Gastrocnemius medialis (tissue), 4 donors: ENCODE measurements at regions of chr20 and their contacts with region 1.

Region 1: DNA sequence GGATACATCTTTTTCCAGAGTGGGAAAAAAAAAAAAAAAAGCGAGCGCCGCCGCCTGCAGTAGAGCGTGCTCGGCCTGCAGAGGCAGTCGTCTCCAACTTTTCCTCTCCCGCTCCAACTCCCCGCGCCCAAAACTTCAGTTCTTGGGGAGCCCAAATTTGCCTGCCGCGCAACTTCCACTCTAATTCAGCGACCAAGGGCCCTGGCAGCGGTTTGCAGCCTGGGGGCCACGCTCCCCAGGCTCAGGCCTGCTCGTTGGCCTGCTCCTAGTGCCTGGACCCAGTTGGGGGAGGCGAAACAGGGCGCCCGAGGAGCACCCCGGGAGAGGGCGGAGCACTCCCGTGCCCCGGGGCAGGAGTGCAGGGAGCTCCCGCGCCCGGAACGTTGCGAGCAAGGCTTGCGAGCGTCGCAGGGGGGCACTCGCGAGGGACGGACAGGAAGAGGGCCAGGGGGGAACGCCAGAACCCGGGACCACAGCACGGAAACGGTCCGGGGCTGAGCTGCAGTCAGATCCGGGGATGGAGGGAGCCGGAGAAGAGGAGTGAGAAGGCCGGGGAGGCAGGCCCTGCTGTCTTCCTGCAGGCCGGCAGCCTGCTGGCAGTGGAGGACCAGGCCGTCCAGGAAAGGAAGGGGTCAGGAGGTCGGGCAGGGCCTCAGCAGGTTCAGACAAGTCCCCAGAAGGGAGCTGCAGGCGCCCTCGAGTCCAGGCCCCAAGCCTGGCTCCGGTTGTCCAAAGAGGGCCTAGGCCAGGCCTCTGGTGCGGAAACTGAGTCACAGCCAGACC is at the start of gene STX16:
- DNase-seq: peak; percentile 80 to 83
- ATAC-seq: peak; percentile 85 to 91
- H3K4me3 ChIP-seq: peak within 1 kb of the TSS; percentile 90 to 99 (median 98)
- H3K27ac ChIP-seq: peak within 1 kb of the TSS; percentile 85 to 98 (median 97)
- H3K4me1 ChIP-seq: peaks cover 44% of the 10 kb centered on the region in 2 donors
- H3K27me3 ChIP-seq: no peaks in the 10 kb centered on the region
- CTCF ChIP-seq: peak; percentile 57 to 71 (median 59)
- POLR2A ChIP-seq: peak; percentile 49 to 64
- total RNA-seq, gene STX16: 9.2 to 34.3 (median 20.4) TPM

Region 2: DNA sequence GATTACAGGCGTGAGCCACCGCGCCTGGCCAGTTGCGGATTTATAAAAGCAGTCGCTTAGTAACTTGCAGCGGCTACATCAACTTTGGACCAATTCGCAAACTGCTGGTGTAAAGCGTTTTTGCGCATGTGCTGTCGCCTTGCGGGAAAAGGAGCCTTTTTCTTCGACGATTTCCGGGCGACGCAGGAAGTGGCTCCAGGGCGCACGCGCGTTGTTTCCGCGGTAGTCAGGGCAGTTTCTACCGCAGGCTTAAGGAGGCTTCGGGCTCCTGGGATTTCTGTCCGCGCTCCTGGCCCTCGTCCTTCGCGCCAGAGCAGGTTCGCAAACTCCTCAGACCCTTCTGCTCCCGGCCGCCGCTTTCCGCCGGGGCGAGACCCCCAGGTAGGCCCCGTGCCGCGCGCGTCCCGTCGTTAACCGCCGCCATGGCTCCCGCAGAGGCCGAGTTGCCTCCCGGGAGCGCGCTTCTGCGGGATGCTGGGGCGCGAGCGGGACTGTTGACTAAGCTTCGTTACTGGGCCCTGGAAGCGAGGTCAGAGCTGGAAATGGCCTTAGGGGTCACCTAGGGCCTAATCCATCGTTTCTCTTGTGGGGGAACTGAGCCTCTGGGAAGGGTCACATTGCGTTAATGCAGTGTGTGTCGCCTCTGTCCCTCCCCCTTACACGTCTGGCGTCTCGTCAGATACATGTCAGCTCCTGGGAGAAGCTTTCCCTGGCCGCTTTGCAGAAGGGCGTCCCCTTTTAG is 1299.8 kb before region 1 on chr20 and contains the start of gene RAE1:
- in situ Hi-C with region 1: loop called in 1 of 4 experiments (anchors 25 kb)
- intact Hi-C with region 1: no loop called
- DNase-seq: peak; percentile 83
- ATAC-seq: peak; percentile 94 to 97
- H3K4me3 ChIP-seq: peak within 1 kb of the TSS; percentile 85 to 97 (median 94)
- H3K27ac ChIP-seq: peak within 1 kb of the TSS; percentile 82 to 85 (median 84)
- H3K4me1 ChIP-seq: peaks cover 6 to 9% of the 10 kb centered on the region in 2 donors
- H3K27me3 ChIP-seq: no peaks in the 10 kb centered on the region
- CTCF ChIP-seq: no peak
- POLR2A ChIP-seq: peak; percentile 40 to 64
- total RNA-seq, gene RAE1: 15.8 to 35.8 (median 20.6) TPM

Region 3: GRCh38 chr20:58112017-58112781 is 538.8 kb before region 1 on chr20:
- in situ Hi-C with region 1: no loop called
- intact Hi-C with region 1: no loop called
- DNase-seq: peak in 1 of 2 donors; percentile 21
- ATAC-seq: peak; percentile 56 to 58
- H3K4me3 ChIP-seq: no peak overlapping the region
- H3K27ac ChIP-seq: peak overlapping the region in 1 of 4 donors; percentile 30
- H3K4me1 ChIP-seq: no peaks in the 10 kb centered on the region
- H3K27me3 ChIP-seq: no peaks in the 10 kb centered on the region
- CTCF ChIP-seq: no peak
- POLR2A ChIP-seq: no peak

Region 4: DNA sequence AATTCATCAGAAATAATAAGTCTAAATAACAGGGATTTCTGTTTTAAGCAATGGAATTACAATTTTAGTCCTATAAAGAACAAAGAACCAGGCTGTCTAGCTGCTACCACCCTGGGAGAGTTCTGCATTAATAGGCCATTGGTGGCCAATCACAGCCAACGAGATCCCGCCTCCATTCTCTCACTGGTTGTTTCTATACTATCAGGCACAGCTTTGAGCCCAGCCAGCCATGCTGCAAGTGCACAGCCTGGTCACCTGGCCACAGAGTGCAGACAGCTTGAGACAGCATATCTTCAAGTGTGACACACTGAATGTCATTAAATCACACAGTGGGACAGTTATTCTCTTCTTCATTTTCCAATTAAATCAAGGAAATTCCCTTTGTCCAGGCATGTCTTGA is 357.5 kb before region 1 on chr20:
- in situ Hi-C with region 1: loop called in 1 of 4 experiments (anchors 25 kb)
- intact Hi-C with region 1: no loop called
- DNase-seq: no peak
- ATAC-seq: no peak
- H3K4me3 ChIP-seq: no peak overlapping the region
- H3K27ac ChIP-seq: no peak overlapping the region
- H3K4me1 ChIP-seq: no peaks in the 10 kb centered on the region
- H3K27me3 ChIP-seq: no peaks in the 10 kb centered on the region
- CTCF ChIP-seq: no peak
- POLR2A ChIP-seq: no peak

Region 5: GRCh38 chr20:58431134-58431533 is 219.8 kb before region 1 on chr20:
- in situ Hi-C with region 1: no loop called
- intact Hi-C with region 1: no loop called
- DNase-seq: no peak
- ATAC-seq: no peak
- H3K4me3 ChIP-seq: no peak overlapping the region
- H3K27ac ChIP-seq: peak overlapping the region in 1 of 4 donors; percentile 57
- H3K4me1 ChIP-seq: peaks cover 26 to 27% of the 10 kb centered on the region in 2 donors
- H3K27me3 ChIP-seq: no peaks in the 10 kb centered on the region
- CTCF ChIP-seq: no peak
- POLR2A ChIP-seq: no peak

Region 6: DNA sequence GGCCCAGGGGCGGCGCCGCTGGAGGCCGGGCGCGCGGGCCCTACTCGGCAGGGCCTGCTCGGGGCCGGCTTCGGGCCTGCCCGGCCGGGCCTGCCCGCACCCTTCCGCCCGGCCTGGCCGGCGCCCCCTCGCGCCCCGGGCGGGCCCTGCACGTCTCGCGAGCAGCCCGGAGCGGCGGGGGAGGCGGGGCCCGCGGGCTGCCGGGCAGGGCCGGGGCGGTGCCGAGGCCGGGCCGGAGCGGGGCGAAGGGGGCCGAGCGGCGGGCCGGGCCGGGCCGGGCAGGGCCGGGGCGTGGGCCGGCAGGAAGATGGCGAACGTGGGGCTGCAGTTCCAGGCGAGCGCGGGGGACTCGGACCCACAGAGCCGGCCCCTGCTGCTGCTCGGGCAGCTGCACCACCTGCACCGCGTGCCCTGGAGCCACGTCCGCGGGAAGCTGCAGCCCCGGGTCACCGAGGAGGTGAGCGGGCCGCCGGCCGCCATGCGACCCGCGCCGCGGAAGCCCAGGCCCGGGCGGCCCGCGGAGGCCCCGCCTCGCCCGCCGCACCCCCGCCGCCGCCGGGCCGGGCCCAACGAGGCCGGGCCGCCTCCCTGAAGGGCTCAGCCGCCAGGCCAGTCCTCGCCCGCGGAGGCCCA is 41.7 kb after region 1 on chr20 and contains the start of gene NPEPL1:
- in situ Hi-C with region 1: no loop called
- intact Hi-C with region 1: loop called (anchors 1 kb)
- DNase-seq: peak in 1 of 2 donors; percentile 58
- ATAC-seq: peak; percentile 80 to 81
- H3K4me3 ChIP-seq: peak within 1 kb of the TSS; percentile 51 to 66 (median 58)
- H3K27ac ChIP-seq: peak within 1 kb of the TSS; percentile 81 to 90 (median 86)
- H3K4me1 ChIP-seq: peaks cover 32 to 38% of the 10 kb centered on the region in 2 donors
- H3K27me3 ChIP-seq: no peaks in the 10 kb centered on the region
- CTCF ChIP-seq: peak in 4 of 5 experiments; percentile 35 to 61 (median 45)
- POLR2A ChIP-seq: peak in 1 of 2 donors; percentile 38
- total RNA-seq, gene NPEPL1: 18.1 to 51.5 (median 34.3) TPM

Region 7: DNA sequence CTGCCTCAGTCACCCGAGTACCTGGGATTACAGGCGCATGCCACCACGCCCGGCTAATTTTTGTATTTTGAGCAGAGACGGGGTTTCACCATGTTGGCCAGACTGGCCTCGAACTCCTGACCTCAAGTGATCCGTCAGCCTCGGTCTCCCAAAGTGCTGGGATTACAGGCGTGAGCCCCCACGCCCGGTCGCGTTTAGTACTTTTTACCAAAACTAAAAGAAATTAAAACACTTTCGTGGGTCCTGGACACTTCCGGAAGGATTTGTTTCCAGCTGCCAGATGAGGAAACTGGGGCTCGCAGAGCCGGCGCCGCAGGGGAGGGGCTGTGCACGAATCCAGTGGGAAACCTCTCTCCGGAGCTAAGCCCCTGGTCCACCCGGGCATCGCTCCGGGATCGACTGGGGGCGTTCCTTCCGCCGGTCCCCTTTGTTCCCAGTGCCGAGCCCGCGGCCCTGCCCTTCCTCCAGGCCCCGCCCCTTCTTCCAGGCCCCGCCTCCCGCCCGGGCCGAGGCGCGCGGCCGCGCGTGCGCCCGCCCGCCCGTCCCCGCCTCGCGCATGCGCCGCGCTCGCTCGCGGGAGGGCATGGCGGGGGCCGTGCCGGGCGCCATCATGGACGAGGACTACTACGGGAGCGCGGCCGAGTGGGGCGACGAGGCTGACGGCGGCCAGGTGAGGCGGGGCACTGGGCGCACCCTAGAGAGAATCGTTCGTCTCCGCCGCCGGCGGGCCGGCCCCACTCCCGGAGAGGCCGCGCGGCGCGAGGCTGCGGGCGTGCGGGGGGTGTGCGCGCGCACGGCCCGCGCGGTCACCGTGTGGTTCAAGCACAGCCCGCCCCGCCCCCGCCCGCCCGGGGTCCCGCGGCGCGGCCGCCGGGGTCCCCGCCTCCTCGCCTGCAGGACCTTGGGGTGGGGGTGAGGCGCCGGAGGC is 330.0 kb after region 1 on chr20 and contains the start of gene NELFCD:
- in situ Hi-C with region 1: no loop called
- intact Hi-C with region 1: loop called (anchors 10 kb)
- DNase-seq: peak; percentile 72 to 82
- ATAC-seq: peak; percentile 89 to 92
- H3K4me3 ChIP-seq: peak within 1 kb of the TSS; percentile 90 to 100 (median 95)
- H3K27ac ChIP-seq: peak within 1 kb of the TSS; percentile 83 to 92 (median 90)
- H3K4me1 ChIP-seq: peaks cover 32 to 38% of the 10 kb centered on the region in 2 donors
- H3K27me3 ChIP-seq: no peaks in the 10 kb centered on the region
- CTCF ChIP-seq: no peak
- POLR2A ChIP-seq: peak; percentile 80
- total RNA-seq, gene NELFCD: 37.8 to 44.3 (median 40.9) TPM

Region 8: DNA sequence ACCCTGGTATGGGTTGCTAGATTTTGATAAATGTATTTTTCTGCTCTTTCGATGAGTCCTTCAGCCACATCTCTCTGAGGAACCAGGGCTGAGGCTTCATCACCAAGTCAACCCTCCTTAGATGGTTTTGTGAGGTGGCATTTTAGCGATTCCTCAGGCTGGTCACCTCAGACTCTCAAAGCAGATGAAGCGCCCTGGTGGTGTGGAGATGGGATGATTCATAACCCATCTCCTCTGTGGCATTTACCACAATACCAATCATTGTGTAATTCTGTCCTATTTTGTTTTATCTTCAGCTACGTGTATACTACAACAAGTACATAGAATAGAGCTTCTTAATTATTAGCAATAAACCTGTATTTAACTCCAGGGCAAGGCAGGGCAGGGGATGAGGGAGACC is 591.7 kb after region 1 on chr20:
- in situ Hi-C with region 1: no loop called
- intact Hi-C with region 1: no loop called
- DNase-seq: no peak
- ATAC-seq: no peak
- H3K4me3 ChIP-seq: no peak overlapping the region
- H3K27ac ChIP-seq: no peak overlapping the region
- H3K4me1 ChIP-seq: no peaks in the 10 kb centered on the region
- H3K27me3 ChIP-seq: peaks cover 3 to 4% (median 4%) of the 10 kb centered on the region in 3 donors
- CTCF ChIP-seq: no peak
- POLR2A ChIP-seq: no peak